Right ventricle myocardium superior (tissue), 1 donor: ENCODE measurements at regions of chr5 and their contacts with region 1.

Region 1: GRCh38 chr5:132813599-132814502 is 749 bp downstream of the SOWAHA start:
- DNase-seq: peak; percentile 40
- ATAC-seq: peak; percentile 85

Region 2: DNA sequence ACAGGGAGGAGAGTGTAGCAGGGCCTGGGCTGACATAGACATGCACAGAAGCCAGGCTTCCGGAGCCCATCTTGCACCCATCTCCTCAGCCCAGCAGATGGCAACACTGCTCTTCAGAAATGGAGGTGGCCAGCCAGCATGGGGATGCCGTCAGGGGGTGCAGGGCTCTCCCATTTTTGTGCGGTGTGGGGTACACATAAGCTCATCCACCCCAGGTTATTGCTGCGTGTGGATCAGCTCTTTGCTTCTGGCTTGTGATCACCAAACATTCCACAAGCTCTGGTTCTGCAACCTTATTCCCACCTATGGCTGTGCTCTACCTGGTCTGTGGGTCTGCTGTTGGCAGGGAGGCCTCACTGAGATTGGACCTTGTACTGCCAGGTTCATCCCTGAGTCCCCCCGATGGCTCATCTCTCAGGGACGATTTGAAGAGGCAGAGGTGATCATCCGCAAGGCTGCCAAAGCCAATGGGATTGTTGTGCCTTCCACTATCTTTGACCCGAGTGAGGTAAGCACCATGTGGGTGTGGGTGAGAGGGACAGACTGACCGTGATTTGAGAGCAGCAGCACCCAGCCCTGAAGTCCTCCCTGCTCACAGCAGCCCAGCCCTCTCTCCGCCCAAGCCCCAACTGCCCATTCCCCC is 427.1 kb before region 1 on chr5:
- intact Hi-C with region 1: loop called (anchors 10 kb)
- DNase-seq: peak; percentile 84
- ATAC-seq: peak; percentile 86